ENCODE measurements at regions of chr19 and their contacts with region 1.

Region 1: DNA sequence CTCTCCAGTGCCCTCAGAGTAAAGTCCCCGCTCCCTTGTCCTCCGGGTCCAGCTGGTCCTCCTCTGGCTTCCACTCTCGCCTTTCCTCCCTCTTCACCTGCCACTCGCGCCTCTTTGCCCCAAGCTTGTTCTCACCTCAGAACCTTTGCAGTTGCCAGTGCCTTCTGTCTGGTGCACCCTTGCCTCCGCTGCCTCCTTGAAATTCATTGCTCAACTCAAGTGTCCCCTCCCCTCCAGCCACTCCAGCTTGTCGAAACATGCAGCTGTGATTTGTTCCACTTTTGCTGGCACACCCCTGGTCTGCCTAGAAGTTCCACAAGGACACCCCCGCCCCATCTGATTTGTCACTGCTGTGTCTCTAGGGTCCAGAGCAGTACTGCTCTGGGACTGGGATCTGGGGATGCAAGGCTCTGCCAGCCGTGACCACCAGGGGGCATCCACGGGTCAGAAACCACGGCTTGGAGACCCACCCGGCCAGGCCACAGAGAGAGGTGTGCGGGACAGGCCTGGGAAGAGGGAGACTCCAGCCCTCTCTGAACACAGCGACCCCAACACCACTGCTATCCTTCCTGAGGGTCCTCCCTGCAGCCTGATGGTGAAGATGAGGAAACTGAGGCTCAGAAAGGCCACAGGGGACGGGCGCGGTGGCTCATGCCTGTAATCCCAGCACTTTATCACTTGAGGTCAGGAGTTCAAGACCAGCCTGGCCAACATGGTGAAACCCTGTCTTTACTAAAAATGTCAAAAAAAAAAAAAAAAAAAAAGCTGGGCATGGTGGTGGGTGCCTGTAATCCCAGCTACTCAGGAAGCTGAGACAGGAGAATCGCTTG is 49.9 kb downstream of the AP1M1 start:
- DNase-seq: peak; percentile 96
- H3K4me3 ChIP-seq: no peak overlapping the region
- H3K27ac ChIP-seq: peak overlapping the region in 2 of 8 donors; percentile 8 to 33
- H3K4me1 ChIP-seq: peaks cover 5 to 52% (median 25%) of the 10 kb centered on the region in 6 donors
- H3K27me3 ChIP-seq: no peaks in the 10 kb centered on the region
- CTCF ChIP-seq: peak; percentile 92 to 99 (median 97)
- POLR2A ChIP-seq: no peak

Region 2: GRCh38 chr19:16293118-16294091 is 45.8 kb after region 1 on chr19:
- intact Hi-C with region 1: no loop called
- DNase-seq: no peak
- H3K4me3 ChIP-seq: peak overlapping the region in 1 of 8 donors; percentile 1
- H3K27ac ChIP-seq: peak overlapping the region in 7 of 8 donors; percentile 61 to 79 (median 71)
- H3K4me1 ChIP-seq: peaks cover 0 to 13% (median 4%) of the 10 kb centered on the region in 6 donors
- H3K27me3 ChIP-seq: no peaks in the 10 kb centered on the region
- CTCF ChIP-seq: no peak
- POLR2A ChIP-seq: no peak

Region 3: DNA sequence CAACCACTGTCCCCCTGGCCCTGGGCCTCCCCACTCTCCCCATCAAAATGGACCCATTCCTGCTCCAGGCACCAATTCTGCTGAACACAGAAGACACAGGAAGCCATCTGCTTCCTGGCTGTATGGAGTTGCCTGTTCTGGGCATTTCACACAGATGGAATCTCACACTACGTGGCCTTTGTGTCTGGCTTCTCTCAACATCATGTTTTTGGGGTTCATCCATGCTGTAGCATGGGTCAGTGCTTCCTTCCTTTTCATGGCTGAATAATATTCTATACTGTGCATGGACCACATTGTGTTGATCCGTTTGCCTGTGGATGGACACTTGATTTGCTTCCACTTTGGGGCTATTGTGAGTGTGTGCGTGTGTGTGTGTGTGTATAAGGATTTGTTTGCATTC is 62.1 kb after region 1 on chr19:
- intact Hi-C with region 1: no loop called
- DNase-seq: no peak
- H3K4me3 ChIP-seq: no peak overlapping the region
- H3K27ac ChIP-seq: no peak overlapping the region
- H3K4me1 ChIP-seq: peaks cover 0 to 17% (median 6%) of the 10 kb centered on the region in 6 donors
- H3K27me3 ChIP-seq: no peaks in the 10 kb centered on the region
- CTCF ChIP-seq: no peak
- POLR2A ChIP-seq: no peak

Region 4: DNA sequence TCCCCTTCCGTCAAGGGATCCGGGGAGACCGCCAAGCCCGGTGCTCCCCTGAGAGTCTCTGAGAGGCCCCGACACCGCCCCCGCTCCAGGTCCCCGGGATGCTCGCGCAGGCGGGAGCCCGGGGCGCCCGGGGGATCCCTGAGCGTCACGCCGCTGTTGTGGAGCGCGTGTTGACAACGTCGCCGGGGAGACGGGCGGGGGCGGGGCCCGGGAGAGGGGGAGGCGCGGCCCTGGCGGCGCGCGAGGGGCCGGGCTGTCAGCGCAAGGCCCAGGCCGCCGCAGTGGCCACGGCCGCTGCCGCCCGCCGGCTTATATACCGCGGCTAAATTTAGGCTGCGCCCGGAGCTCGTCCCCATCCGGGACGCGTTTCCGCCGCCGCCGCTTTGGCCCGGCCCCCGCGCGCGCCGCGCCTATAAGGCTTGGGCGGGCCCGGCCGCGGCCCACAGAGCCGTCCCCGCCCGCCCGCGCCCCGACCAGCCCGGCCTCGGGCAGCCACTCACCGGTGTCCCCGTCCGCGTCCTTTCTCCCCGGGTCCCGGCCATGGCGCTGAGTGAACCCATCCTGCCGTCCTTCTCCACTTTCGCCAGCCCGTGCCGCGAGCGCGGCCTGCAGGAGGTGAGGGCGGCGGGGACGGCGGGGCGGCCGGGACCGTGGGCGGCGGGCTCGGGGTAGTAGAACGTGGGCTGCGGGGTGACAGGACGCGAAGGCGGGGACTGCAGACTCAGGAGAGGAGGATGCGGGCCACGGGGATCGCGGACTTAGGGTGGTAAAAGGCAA is 77.0 kb after region 1 on chr19 and contains the start of gene KLF2:
- intact Hi-C with region 1: loop called (anchors 5 kb)
- DNase-seq: peak; percentile 99
- H3K4me3 ChIP-seq: peak within 1 kb of the TSS; percentile 81 to 98 (median 94)
- H3K27ac ChIP-seq: peak within 1 kb of the TSS; percentile 85 to 99 (median 96)
- H3K4me1 ChIP-seq: peaks cover 17 to 73% (median 58%) of the 10 kb centered on the region in 6 donors
- H3K27me3 ChIP-seq: peaks cover 0 to 4% (median 0%) of the 10 kb centered on the region in 7 donors
- CTCF ChIP-seq: peak in 2 of 11 experiments; percentile 7 to 16
- POLR2A ChIP-seq: peak; percentile 95 to 97 (median 96)
- total RNA-seq, gene KLF2: 86.0 to 179 (median 106) TPM

Region 5: DNA sequence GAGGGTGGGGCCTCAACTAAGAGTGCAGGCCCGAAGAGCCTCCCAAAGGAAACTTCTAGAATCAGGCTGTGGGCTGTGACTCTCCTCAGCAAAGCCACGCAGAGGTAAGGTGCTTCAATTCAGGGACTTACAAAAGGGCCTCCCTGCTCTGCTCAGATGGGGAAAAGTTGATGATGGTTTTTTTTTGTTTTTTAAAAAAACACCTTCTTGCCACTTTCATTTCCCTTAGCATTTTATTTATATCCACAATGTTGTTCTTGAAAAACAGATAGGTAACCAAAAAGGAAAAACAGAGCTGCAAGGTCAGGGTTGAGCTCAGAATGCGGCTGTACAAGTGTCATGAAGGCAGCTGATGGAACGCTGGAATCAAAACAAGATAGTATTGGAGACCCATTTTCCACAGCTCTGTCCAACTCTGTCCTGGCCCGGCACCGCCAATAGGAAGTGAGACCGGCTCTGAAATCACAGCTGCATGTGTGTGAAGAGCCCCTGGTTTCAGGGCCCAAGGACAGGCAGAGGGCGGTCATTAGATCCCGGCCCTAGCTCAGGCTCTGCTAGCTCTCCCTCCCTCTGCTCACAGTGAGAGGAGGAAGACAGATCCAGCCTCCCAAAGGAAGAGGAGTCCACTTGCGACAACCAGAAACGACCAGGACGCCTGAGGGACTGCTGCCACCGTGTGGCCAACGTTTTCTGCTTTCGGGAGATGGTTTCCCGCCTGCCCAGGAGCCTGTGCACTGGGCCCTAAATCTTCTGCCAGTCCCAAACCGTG is 135.4 kb after region 1 on chr19:
- intact Hi-C with region 1: loop called (anchors 2 kb)
- DNase-seq: peak; percentile 93
- H3K4me3 ChIP-seq: peak overlapping the region in 1 of 8 donors; percentile 41
- H3K27ac ChIP-seq: peak overlapping the region; percentile 64 to 93 (median 84)
- H3K4me1 ChIP-seq: peaks cover 27 to 87% (median 36%) of the 10 kb centered on the region in 6 donors
- H3K27me3 ChIP-seq: no peaks in the 10 kb centered on the region
- CTCF ChIP-seq: peak; percentile 81 to 94 (median 89)
- POLR2A ChIP-seq: no peak

Measured in spleen (tissue), 13 donors.